H1 (cell line): ENCODE measurements at regions of chr9 and their contacts with region 1.

Region 1: GRCh38 chr9:117247266-117247665 is 167.6 kb downstream of the ASTN2 start:
- DNase-seq: no peak
- H3K4me3 ChIP-seq: no peak overlapping the region
- H3K27ac ChIP-seq: no peak overlapping the region
- H3K4me1 ChIP-seq: no peaks in the 10 kb centered on the region
- H3K27me3 ChIP-seq: no peaks in the 10 kb centered on the region
- CTCF ChIP-seq: peak in 2 of 3 experiments; percentile 47 to 63; a peak in 3 of 4 replicates
- EP300 ChIP-seq: no peak
- POLR2A ChIP-seq: no peak
- RAD21 ChIP-seq: peak; percentile 63 to 74

Region 2: DNA sequence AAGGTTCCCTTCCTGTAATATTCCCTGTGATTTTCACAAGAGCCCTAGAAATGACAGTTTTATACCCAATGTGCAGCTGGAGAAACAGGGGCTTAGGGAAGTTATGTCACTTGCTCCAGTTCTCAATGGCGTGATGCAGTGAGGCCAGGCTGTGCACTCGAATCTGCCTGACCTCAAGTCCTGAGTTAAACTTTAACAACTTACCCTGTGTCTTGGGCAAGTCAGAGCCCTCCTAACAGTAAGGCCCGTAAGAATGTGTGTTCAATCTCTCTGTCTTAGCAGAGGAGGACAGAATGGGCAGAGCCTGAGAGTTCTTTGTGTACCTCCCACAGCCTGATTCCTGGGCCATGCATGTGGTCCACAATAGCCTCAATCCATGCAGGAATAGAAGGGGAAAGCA is 379.1 kb before region 1 on chr9:
- CTCF ChIA-PET with region 1: no interaction called
- POLR2A ChIA-PET with region 1: no interaction called
- DNase-seq: no peak
- H3K4me3 ChIP-seq: no peak overlapping the region
- H3K27ac ChIP-seq: no peak overlapping the region
- H3K4me1 ChIP-seq: peaks cover 0 to 6% (median 3%) of the 10 kb centered on the region in 4 experiments; a peak in 4 of 7 replicates
- H3K27me3 ChIP-seq: no peaks in the 10 kb centered on the region
- CTCF ChIP-seq: no peak
- EP300 ChIP-seq: no peak
- POLR2A ChIP-seq: no peak
- RAD21 ChIP-seq: no peak

Region 3: GRCh38 chr9:117073539-117074341 is 173.5 kb before region 1 on chr9:
- CTCF ChIA-PET with region 1: no interaction called
- POLR2A ChIA-PET with region 1: no interaction called
- DNase-seq: peak; percentile 25 to 83
- H3K4me3 ChIP-seq: no peak overlapping the region
- H3K27ac ChIP-seq: no peak overlapping the region
- H3K4me1 ChIP-seq: peaks cover 0 to 10% (median 4%) of the 10 kb centered on the region in 4 experiments; a peak in 4 of 7 replicates
- H3K27me3 ChIP-seq: no peaks in the 10 kb centered on the region
- CTCF ChIP-seq: peak; percentile 57 to 88 (median 81)
- EP300 ChIP-seq: no peak
- POLR2A ChIP-seq: no peak
- RAD21 ChIP-seq: peak; percentile 91 to 96

Region 4: GRCh38 chr9:117184173-117184572 is 63.1 kb before region 1 on chr9:
- CTCF ChIA-PET with region 1: interaction called, 11 read pairs
- POLR2A ChIA-PET with region 1: no interaction called
- DNase-seq: no peak
- H3K4me3 ChIP-seq: no peak overlapping the region
- H3K27ac ChIP-seq: no peak overlapping the region
- H3K4me1 ChIP-seq: peaks cover 0 to 3% (median 0%) of the 10 kb centered on the region in 4 experiments; a peak in 2 of 7 replicates
- H3K27me3 ChIP-seq: no peaks in the 10 kb centered on the region
- CTCF ChIP-seq: no peak
- EP300 ChIP-seq: no peak
- POLR2A ChIP-seq: no peak
- RAD21 ChIP-seq: no peak

Region 5: DNA sequence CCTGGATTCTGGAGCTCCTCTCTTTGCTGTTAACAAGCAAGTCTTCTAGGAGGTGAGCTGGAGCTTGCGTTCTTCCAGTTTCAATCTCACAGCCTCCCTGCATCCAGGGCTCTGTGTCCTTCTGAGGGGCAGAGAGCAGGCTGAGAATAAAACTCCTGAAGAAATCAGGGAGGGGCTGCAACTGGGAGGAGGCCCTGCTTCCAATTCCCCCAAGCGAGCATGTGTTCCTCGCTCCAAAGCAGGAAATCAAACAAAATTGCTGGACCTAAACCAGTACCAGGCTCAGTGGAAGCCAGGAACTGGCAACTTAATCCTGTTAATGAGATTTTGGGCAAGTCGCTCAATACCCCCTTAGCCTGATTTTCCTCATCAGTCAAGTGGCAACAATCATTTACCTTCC is 14.2 kb before region 1 on chr9:
- CTCF ChIA-PET with region 1: interaction called, 87 read pairs
- POLR2A ChIA-PET with region 1: no interaction called
- DNase-seq: no peak
- H3K4me3 ChIP-seq: no peak overlapping the region
- H3K27ac ChIP-seq: no peak overlapping the region
- H3K4me1 ChIP-seq: no peaks in the 10 kb centered on the region
- H3K27me3 ChIP-seq: no peaks in the 10 kb centered on the region
- CTCF ChIP-seq: no peak
- EP300 ChIP-seq: no peak
- POLR2A ChIP-seq: no peak
- RAD21 ChIP-seq: no peak

Region 6: DNA sequence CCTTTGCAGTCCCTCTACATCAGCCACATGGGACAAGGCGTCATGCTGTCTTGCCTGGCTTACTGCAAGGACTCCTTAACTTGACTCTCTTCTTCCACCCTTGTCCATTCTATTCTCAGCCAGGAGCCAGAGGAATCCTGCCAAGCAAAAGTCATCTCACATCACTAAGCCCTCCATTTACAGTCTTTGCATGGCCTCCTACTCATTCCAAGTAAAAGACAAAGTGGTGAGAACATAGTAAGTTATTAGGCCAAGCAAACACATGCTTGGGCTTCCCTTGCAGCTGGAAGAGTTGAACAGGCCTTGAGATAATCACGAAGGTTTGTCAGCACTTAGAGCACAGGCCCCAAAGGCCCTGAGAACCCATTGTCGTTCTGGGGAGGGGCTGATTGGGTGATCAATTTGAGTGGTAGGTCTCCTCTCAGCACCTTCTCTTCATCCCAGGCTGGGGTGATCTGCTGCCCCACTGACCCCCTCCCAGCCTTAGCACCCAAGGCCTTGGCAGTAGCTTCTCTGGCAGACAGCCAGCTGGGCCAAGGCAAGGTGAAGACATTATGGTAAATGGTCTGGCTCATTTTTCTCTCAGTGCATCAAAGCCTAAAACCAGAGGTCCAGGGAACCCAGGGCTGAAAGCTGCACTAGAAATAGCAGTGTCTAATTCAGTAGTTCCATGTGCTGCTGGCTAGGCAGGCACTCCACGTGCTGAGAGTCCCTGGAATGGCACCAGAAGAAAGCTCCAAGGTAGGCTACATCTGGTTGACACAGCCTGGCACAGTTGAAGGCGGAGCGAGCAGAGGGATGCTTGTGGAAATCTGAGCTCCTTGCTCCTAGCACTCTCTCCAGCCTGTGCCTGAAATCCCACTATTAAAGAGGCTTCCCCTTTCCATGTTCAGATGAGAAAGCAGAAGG is 46.2 kb after region 1 on chr9:
- CTCF ChIA-PET with region 1: interaction called, 13 read pairs
- POLR2A ChIA-PET with region 1: no interaction called
- DNase-seq: no peak
- H3K4me3 ChIP-seq: no peak overlapping the region
- H3K27ac ChIP-seq: no peak overlapping the region
- H3K4me1 ChIP-seq: no peaks in the 10 kb centered on the region; a peak in 1 of 7 replicates
- H3K27me3 ChIP-seq: no peaks in the 10 kb centered on the region
- CTCF ChIP-seq: no peak
- EP300 ChIP-seq: no peak
- POLR2A ChIP-seq: no peak
- RAD21 ChIP-seq: no peak

Region 7: DNA sequence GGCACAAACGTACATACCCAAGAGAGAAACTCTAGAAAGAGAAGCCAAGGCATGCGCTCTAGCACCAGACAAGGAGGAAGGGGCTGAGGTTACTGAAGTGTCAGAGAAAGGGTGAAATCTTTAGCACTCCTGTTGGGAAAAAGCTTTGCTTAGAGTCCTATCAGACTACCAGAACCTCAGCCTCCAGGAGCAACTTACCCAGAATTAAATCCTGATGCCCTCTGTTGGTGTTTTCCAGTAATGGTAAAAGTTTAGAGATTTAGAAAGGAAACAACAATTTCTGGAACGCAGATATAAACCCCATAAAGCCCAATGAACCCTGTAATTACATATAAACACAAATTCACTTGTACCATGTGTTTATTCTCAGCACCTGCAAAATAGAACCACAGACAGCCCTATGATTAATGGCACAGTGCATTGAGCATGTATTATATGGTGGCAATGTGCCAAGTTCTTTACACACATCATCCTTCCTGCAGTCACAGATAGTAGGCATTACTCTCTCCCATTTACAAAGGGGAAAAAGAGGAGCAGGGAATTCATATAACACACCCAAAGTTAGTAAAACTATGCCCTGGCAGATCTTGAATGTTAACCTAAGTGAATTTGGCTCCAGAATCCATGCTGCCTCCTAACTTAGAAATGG is 200.9 kb after region 1 on chr9:
- CTCF ChIA-PET with region 1: interaction called, 16 read pairs
- POLR2A ChIA-PET with region 1: no interaction called
- DNase-seq: no peak
- H3K4me3 ChIP-seq: no peak overlapping the region
- H3K27ac ChIP-seq: no peak overlapping the region
- H3K4me1 ChIP-seq: no peaks in the 10 kb centered on the region
- H3K27me3 ChIP-seq: no peaks in the 10 kb centered on the region; a peak in 1 of 7 replicates
- CTCF ChIP-seq: peak in 2 of 3 experiments; percentile 39 to 61; a peak in 3 of 4 replicates
- EP300 ChIP-seq: no peak
- POLR2A ChIP-seq: no peak
- RAD21 ChIP-seq: peak; percentile 60 to 64